WTC11 (cell line): ENCODE measurements at regions of chr12 and their contacts with region 1.

Region 1: GRCh38 chr12:14937689-14938088 is 648 bp downstream of the ERP27 start:
- DNase-seq: peak; percentile 21
- ATAC-seq: peak; percentile 74
- H3K4me3 Mint-ChIP-seq: no peak overlapping the region
- H3K27ac Mint-ChIP-seq: no peak overlapping the region
- H3K4me1 Mint-ChIP-seq: no peaks in the 10 kb centered on the region
- H3K27me3 Mint-ChIP-seq: no peaks in the 10 kb centered on the region
- CTCF ChIP-seq: 0 out of 2 replicates have a peak, but pooled peaks have one; percentile 24

Region 2: DNA sequence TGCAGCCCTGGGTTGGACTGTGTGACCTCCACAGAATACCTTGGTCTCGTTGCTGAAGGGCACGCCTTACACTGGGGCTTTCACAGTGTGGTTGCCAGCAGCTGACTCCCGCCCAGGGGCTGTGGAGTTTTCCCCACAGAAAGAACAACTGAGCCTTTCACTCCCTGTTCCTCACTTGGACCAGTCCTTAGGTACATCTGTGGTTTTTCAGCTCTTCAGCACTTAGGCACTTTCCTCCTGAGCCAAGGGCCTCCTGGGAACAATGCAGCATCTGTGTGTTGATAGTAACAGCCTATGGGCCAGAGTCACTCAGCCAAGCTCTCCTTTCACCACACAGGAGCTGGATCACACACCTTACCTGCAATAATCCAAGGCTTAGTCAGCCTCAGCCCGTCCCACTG is 24.3 kb before region 1 on chr12:
- CTCF ChIA-PET with region 1: interaction called, 10 read pairs
- POLR2A ChIA-PET with region 1: no interaction called
- DNase-seq: no peak
- ATAC-seq: peak; percentile 30; the same call in 1 of the 2 replicates
- H3K4me3 Mint-ChIP-seq: no peak overlapping the region
- H3K27ac Mint-ChIP-seq: no peak overlapping the region
- H3K4me1 Mint-ChIP-seq: no peaks in the 10 kb centered on the region
- H3K27me3 Mint-ChIP-seq: no peaks in the 10 kb centered on the region
- CTCF ChIP-seq: no peak

Region 3: DNA sequence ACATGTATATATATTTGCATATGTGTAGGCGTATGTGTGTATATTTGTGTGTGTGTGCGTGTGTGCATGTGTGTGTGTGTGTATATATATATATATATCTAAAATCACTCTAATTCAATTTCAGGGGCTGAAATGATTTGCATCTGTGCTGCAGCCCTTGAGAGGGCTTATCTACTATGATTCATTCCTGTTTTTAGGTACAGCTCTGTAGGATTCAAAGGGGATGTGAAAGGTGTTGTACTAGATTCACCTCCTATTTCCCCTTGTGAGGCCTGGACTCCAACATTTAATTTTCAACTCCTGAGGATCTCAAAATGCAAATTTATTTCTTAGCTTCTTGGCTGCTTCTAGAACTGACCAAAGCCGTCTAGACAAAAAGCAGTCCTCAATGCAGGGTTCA is 10.4 kb before region 1 on chr12:
- CTCF ChIA-PET with region 1: interaction called, 10 read pairs
- POLR2A ChIA-PET with region 1: no interaction called
- DNase-seq: no peak
- ATAC-seq: no peak
- H3K4me3 Mint-ChIP-seq: no peak overlapping the region
- H3K27ac Mint-ChIP-seq: no peak overlapping the region
- H3K4me1 Mint-ChIP-seq: peaks cover 19% of the 10 kb centered on the region
- H3K27me3 Mint-ChIP-seq: no peaks in the 10 kb centered on the region
- CTCF ChIP-seq: no peak

Region 4: GRCh38 chr12:14995583-14996425 is 58.1 kb after region 1 on chr12:
- CTCF ChIA-PET with region 1: interaction called, 26 read pairs
- POLR2A ChIA-PET with region 1: no interaction called
- DNase-seq: no peak
- ATAC-seq: no peak
- H3K4me3 Mint-ChIP-seq: no peak overlapping the region
- H3K27ac Mint-ChIP-seq: no peak overlapping the region
- H3K4me1 Mint-ChIP-seq: no peaks in the 10 kb centered on the region
- H3K27me3 Mint-ChIP-seq: no peaks in the 10 kb centered on the region
- CTCF ChIP-seq: no peak; the same call in none of the 2 replicates